ENCODE measurements at regions of chr7 and their contacts with region 1.

Region 1: GRCh38 chr7:90629297-90629918 is 33.3 kb downstream of the CDK14 start:
- DNase-seq: peak; percentile 45
- ATAC-seq: peak; percentile 91
- H3K4me3 ChIP-seq: no peak overlapping the region
- H3K27ac ChIP-seq: no peak overlapping the region
- H3K4me1 ChIP-seq: no peaks in the 10 kb centered on the region
- H3K27me3 ChIP-seq: no peaks in the 10 kb centered on the region
- CTCF ChIP-seq: peak; percentile 63 to 71 (median 64)
- EP300 ChIP-seq: no peak
- POLR2A ChIP-seq: no peak
- RAD21 ChIP-seq: peak; percentile 84

Region 2: DNA sequence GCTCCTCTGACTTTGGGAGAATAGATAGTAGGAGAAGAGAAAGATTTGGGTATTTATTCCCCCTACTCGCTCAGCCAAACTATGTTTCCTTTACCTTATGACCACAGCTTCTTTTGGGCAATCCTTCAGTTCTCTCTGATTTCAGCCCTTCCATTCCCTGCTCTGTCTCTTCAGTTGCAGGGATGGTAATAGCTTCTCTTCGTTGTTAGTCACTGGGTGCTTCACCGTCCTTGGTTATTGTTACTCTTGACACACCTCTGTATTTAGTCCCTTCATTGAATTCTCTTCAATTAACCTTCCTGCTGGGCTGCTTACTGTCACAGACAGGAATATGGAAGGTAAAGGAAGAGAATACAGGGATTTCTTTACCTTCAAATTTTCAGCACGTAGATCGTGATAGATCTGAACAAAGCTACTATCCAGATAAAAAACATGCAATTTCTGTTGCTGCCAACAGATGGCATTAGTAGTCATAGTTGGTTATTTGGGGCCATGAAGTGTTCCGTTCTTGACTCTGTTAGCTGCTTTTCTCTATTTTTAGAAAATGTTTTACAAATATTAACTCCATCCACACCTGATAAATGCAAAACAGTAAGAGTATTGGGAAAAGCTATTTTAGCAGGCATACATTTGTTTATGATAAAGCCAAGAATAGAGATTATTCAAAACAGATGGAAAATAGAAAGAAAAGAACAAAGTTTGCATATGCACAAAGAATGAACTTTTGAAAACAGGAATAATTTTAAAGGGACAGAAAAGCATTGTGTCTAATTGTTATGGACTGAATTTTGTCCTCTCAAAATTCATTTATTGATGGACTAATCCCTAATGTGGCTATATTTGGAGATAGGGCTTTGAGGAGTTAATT is 174.0 kb before region 1 on chr7:
- CTCF ChIA-PET with region 1: interaction called, 50 read pairs
- POLR2A ChIA-PET with region 1: no interaction called
- RAD21 ChIA-PET with region 1: interaction called, 15 read pairs
- SMC1A ChIA-PET with region 1: interaction called, 29 read pairs
- in situ Hi-C with region 1: loop called (anchors 5 kb)
- intact Hi-C with region 1: loop called (anchors 1 kb)
- DNase-seq: peak; percentile 7
- ATAC-seq: peak; percentile 93
- H3K4me3 ChIP-seq: no peak overlapping the region
- H3K27ac ChIP-seq: no peak overlapping the region
- H3K4me1 ChIP-seq: no peaks in the 10 kb centered on the region
- H3K27me3 ChIP-seq: no peaks in the 10 kb centered on the region
- CTCF ChIP-seq: peak; percentile 61 to 76 (median 63); a peak in 5 of 6 replicates
- EP300 ChIP-seq: no peak
- POLR2A ChIP-seq: no peak
- RAD21 ChIP-seq: peak; percentile 79

Region 3: GRCh38 chr7:90552521-90552920 is 76.9 kb before region 1 on chr7:
- CTCF ChIA-PET with region 1: interaction called, 20 read pairs
- POLR2A ChIA-PET with region 1: no interaction called
- RAD21 ChIA-PET with region 1: interaction called, 5 read pairs
- SMC1A ChIA-PET with region 1: interaction called, 5 read pairs
- in situ Hi-C with region 1: no loop called
- intact Hi-C with region 1: loop called (anchors 1 kb)
- DNase-seq: no peak
- ATAC-seq: peak; percentile 63
- H3K4me3 ChIP-seq: no peak overlapping the region
- H3K27ac ChIP-seq: no peak overlapping the region
- H3K4me1 ChIP-seq: no peaks in the 10 kb centered on the region
- H3K27me3 ChIP-seq: no peaks in the 10 kb centered on the region
- CTCF ChIP-seq: no peak; a peak in 1 of 6 replicates
- EP300 ChIP-seq: no peak
- POLR2A ChIP-seq: no peak
- RAD21 ChIP-seq: peak; percentile 31; the same call in 1 of the 2 replicates

Region 4: GRCh38 chr7:90595801-90596671 is 33.4 kb before region 1 on chr7 and contains the start of gene CDK14:
- CTCF ChIA-PET with region 1: interaction called, 16 read pairs
- POLR2A ChIA-PET with region 1: interaction called, 3 read pairs
- RAD21 ChIA-PET with region 1: interaction called, 14 read pairs
- SMC1A ChIA-PET with region 1: interaction called, 14 read pairs
- in situ Hi-C with region 1: no loop called
- intact Hi-C with region 1: no loop called
- DNase-seq: no peak
- ATAC-seq: peak; percentile 58
- H3K4me3 ChIP-seq: peak within 1 kb of the TSS; percentile 92
- H3K27ac ChIP-seq: peak within 1 kb of the TSS; percentile 55
- H3K4me1 ChIP-seq: peaks cover 10% of the 10 kb centered on the region
- H3K27me3 ChIP-seq: no peaks in the 10 kb centered on the region
- CTCF ChIP-seq: peak in 2 of 3 experiments; percentile 29 to 33; a peak in 3 of 6 replicates
- EP300 ChIP-seq: no peak
- POLR2A ChIP-seq: peak; percentile 78
- RAD21 ChIP-seq: peak; percentile 44; the same call in 1 of the 2 replicates
- polyA plus RNA-seq, gene CDK14: 6.5 to 7.3 TPM

Region 5: GRCh38 chr7:90605055-90605454 is 24.4 kb before region 1 on chr7:
- CTCF ChIA-PET with region 1: interaction called, 10 read pairs
- POLR2A ChIA-PET with region 1: interaction called, 3 read pairs
- RAD21 ChIA-PET with region 1: no interaction called
- SMC1A ChIA-PET with region 1: interaction called, 7 read pairs
- in situ Hi-C with region 1: no loop called
- intact Hi-C with region 1: no loop called
- DNase-seq: no peak
- ATAC-seq: peak; percentile 68
- H3K4me3 ChIP-seq: no peak overlapping the region
- H3K27ac ChIP-seq: peak overlapping the region; percentile 56
- H3K4me1 ChIP-seq: peaks cover 19% of the 10 kb centered on the region
- H3K27me3 ChIP-seq: no peaks in the 10 kb centered on the region
- CTCF ChIP-seq: no peak
- EP300 ChIP-seq: no peak
- POLR2A ChIP-seq: no peak
- RAD21 ChIP-seq: no peak

Region 6: DNA sequence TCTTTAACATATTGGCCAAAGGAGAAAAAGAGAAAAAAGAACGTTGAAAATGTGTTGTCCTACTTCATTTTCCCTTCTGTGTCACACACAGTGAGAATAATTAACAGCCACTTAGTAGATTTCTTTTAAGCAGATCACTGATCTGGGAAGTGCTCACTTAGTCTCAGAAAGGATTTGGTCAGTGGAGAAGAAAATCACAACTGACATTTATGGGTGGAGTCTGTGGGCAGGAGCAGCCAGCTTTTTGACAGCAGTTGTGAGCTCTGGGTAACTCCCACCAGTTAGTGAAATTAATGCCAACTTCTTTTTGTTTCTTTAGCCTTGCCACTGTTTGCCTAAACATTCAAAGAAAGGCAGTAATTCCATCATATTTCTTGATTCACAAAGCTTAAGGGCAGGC is 16.4 kb after region 1 on chr7:
- CTCF ChIA-PET with region 1: interaction called, 11 read pairs
- POLR2A ChIA-PET with region 1: interaction called, 4 read pairs
- RAD21 ChIA-PET with region 1: interaction called, 5 read pairs
- SMC1A ChIA-PET with region 1: interaction called, 4 read pairs
- in situ Hi-C with region 1: no loop called
- intact Hi-C with region 1: no loop called
- DNase-seq: no peak
- ATAC-seq: peak; percentile 90
- H3K4me3 ChIP-seq: no peak overlapping the region
- H3K27ac ChIP-seq: no peak overlapping the region
- H3K4me1 ChIP-seq: peaks cover 5% of the 10 kb centered on the region; the same call in 1 of the 2 replicates
- H3K27me3 ChIP-seq: no peaks in the 10 kb centered on the region
- CTCF ChIP-seq: no peak
- EP300 ChIP-seq: no peak
- POLR2A ChIP-seq: no peak
- RAD21 ChIP-seq: no peak

Region 7: GRCh38 chr7:90661290-90662151 is 32.1 kb after region 1 on chr7:
- CTCF ChIA-PET with region 1: interaction called, 14 read pairs
- POLR2A ChIA-PET with region 1: no interaction called
- RAD21 ChIA-PET with region 1: interaction called, 3 read pairs
- SMC1A ChIA-PET with region 1: interaction called, 3 read pairs
- in situ Hi-C with region 1: no loop called
- intact Hi-C with region 1: no loop called
- DNase-seq: no peak
- ATAC-seq: peak; percentile 50
- H3K4me3 ChIP-seq: no peak overlapping the region
- H3K27ac ChIP-seq: peak overlapping the region; percentile 11; the same call in 1 of the 2 replicates
- H3K4me1 ChIP-seq: peaks cover 31% of the 10 kb centered on the region
- H3K27me3 ChIP-seq: no peaks in the 10 kb centered on the region
- CTCF ChIP-seq: no peak
- EP300 ChIP-seq: no peak
- POLR2A ChIP-seq: no peak
- RAD21 ChIP-seq: no peak

Region 8: DNA sequence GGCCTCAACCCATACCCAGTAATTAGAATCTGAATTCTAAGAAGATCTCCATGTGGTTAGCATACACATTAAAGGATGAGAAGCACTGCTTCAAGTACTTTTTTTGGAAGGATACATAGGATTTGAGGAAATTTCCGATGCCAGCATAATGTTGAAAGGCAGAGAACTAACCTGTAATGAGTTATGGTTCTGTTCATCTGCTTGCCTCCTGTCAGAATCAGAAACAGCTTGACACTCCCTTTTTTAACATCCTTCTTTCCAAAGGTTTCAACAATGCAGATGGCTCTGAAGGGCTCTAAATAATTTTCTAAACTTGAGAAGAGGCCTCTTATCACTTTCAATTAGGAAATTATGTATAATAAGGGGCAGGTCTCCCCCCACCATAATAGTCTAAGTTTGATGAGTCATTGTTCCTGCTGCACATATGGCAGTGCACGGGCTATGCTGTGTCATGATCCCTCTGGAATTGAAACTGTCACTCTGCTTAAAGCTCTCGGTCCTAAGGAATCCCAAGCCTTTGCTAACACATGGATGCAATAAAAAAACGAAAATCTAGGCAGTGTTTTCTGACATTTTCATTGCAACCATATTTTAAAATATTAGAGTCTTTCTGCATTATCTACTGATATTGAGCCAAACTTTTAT is 343.6 kb after region 1 on chr7:
- CTCF ChIA-PET with region 1: no interaction called
- POLR2A ChIA-PET with region 1: no interaction called
- RAD21 ChIA-PET with region 1: no interaction called
- SMC1A ChIA-PET with region 1: no interaction called
- in situ Hi-C with region 1: no loop called
- intact Hi-C with region 1: no loop called
- DNase-seq: no peak
- ATAC-seq: no peak
- H3K4me3 ChIP-seq: no peak overlapping the region
- H3K27ac ChIP-seq: no peak overlapping the region
- H3K4me1 ChIP-seq: no peaks in the 10 kb centered on the region
- H3K27me3 ChIP-seq: no peaks in the 10 kb centered on the region
- CTCF ChIP-seq: no peak
- EP300 ChIP-seq: no peak
- POLR2A ChIP-seq: no peak
- RAD21 ChIP-seq: no peak